ENCODE measurements at regions of chr10 and their contacts with region 1.

Region 1: DNA sequence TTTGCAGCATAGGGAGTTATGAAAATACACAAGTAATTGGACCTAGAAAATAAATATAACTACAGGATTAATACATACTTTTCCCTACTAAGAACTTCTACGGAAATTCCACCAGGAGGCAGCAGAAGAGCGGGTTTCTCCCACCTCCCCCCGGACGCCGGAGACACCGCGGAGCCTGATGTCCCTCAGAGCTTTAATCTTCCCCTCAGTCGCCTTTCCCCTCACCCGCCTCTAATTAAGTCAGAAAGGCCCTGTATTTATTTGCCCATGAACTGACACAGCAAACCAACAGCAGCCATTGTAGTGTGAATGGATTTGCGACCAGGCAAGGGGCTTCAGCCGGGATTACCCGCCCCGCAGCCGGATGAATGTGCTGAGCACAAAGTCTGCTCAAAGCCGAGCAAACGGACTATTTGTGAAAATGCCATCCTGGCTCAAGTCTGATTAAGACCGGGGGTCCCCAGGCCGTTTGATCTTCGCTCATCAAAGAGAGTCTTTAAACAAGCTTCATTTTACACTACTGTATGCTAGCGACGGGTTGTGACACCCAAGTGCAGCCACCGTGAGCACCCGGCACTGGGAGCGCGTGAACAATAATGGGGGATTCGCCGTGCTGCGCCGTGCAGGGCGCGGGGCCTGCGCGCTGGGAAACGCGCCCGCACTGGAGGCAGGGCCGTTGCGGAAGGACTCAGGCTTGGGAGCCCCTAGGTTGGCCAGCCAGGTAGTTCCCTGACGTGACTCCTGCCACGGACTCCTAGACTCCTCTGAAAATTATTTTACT is 5.6 kb upstream of the DKK1 start:
- DNase-seq: peak; percentile 69
- ATAC-seq: peak; percentile 85
- H3K4me3 Mint-ChIP-seq: peak overlapping the region; percentile 82
- H3K27ac Mint-ChIP-seq: no peak overlapping the region
- H3K4me1 Mint-ChIP-seq: peaks cover 10% of the 10 kb centered on the region
- H3K27me3 Mint-ChIP-seq: peaks cover 54% of the 10 kb centered on the region
- CTCF ChIP-seq: peak; percentile 54

Region 2: DNA sequence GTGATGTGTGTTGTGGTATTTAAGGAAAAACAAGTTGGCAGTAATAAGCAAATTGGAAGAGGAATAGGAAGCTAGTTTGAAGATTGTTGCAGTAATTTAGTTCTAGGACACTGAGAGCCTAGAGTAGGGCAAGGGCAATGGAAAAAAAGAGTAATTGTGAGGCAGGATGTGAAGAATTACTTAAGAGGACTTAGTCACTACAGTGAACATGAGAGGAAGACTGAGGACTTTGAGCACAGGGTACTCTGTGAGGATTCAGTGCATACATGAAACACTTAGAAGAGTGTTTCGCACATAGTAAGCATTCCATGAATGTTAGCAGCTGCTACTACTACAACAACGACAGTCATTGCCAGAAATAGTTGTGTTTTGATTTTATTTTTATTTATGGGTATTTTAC is 25.3 kb before region 1 on chr10:
- CTCF ChIA-PET with region 1: no interaction called
- POLR2A ChIA-PET with region 1: no interaction called
- DNase-seq: no peak
- ATAC-seq: no peak
- H3K4me3 Mint-ChIP-seq: no peak overlapping the region
- H3K27ac Mint-ChIP-seq: no peak overlapping the region
- H3K4me1 Mint-ChIP-seq: no peaks in the 10 kb centered on the region
- H3K27me3 Mint-ChIP-seq: no peaks in the 10 kb centered on the region
- CTCF ChIP-seq: no peak

Region 3: GRCh38 chr10:52488606-52489485 is 180.4 kb after region 1 on chr10:
- CTCF ChIA-PET with region 1: interaction called, 23 read pairs
- POLR2A ChIA-PET with region 1: no interaction called
- DNase-seq: no peak
- ATAC-seq: no peak
- H3K4me3 Mint-ChIP-seq: no peak overlapping the region
- H3K27ac Mint-ChIP-seq: no peak overlapping the region
- H3K4me1 Mint-ChIP-seq: no peaks in the 10 kb centered on the region
- H3K27me3 Mint-ChIP-seq: no peaks in the 10 kb centered on the region; the same call in 1 of the 2 replicates
- CTCF ChIP-seq: peak; percentile 35; the same call in 1 of the 2 replicates

Region 4: DNA sequence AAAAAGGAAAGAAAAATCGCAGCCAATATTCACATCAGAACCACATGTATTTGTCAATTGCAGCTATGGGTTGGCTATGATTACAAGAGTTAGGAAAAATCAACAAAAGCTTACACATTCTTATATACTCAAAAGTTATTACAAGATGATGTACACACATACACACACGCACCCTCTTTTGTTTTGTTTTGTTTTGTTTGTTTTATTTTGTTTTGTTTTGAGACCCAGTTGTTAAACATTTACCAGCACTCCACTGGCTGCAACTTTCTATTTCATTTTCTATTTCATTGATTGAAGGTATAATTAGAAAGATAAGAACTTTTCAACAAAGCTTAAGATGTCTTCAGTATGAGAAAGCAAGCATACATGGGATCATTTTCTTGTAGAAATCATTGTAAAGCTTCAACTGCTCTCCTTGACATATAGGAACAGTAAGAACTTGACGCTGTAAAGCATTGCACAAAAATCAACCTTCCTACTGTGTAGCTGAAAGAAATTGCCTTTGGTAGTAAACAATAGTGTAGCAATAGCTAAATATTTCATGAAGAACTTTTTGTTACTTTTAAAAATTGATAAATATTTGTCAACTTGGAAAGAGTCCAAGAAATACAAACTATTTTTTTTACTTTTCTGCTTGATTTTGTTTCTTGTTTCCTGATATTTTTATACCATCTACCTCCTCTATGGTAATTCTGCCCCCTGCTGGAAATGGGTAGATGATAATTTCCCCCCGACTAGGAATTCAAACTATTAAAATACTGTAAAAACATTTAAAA is 258.2 kb after region 1 on chr10:
- CTCF ChIA-PET with region 1: interaction called, 39 read pairs
- POLR2A ChIA-PET with region 1: no interaction called
- DNase-seq: no peak
- ATAC-seq: no peak
- H3K4me3 Mint-ChIP-seq: no peak overlapping the region
- H3K27ac Mint-ChIP-seq: no peak overlapping the region
- H3K4me1 Mint-ChIP-seq: no peaks in the 10 kb centered on the region
- H3K27me3 Mint-ChIP-seq: no peaks in the 10 kb centered on the region; the same call in 1 of the 2 replicates
- CTCF ChIP-seq: peak; percentile 34

Measured in WTC11 (cell line).